GM12878 (cell line): ENCODE measurements at regions of chr20 and their contacts with region 1.

Region 1: DNA sequence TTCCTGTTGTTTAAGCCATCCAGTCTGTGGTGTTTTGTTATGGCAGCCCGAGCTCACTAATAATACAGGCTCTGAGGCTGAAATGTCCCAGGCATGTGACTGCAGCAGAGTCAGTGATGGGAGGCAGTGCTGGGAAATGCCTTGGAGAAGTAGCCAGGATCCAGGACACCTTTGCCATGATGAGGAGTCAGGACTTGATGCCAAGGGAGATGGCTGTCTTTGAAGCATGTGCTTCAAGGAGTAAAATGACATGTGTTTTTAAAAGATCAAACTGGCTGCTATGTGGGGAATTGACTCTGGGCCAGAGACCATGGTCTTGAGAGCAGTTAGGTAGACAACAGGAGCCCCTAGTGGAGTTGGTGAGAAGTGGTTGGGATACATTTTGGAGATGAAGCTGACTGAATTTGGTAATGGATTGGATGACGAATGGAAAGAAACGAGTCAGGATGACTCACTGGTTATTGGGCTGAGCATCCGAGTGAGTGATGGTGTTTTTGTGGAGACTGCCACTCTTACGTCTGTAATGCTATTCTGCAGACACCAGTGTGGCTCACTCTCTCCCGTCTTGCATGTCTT is 322.2 kb downstream of the PLCB1 start:
- DNase-seq: peak; percentile 17
- ATAC-seq: peak; percentile 87
- H3K4me3 ChIP-seq: no peak overlapping the region
- H3K27ac ChIP-seq: no peak overlapping the region
- H3K4me1 ChIP-seq: no peaks in the 10 kb centered on the region
- H3K27me3 ChIP-seq: no peaks in the 10 kb centered on the region
- CTCF ChIP-seq: peak; percentile 52 to 57 (median 52)
- EP300 ChIP-seq: no peak
- POLR2A ChIP-seq: no peak
- RAD21 ChIP-seq: peak; percentile 74

Region 2: GRCh38 chr20:8049310-8049709 is 404.9 kb before region 1 on chr20:
- CTCF ChIA-PET with region 1: interaction called, 9 read pairs
- POLR2A ChIA-PET with region 1: no interaction called
- RAD21 ChIA-PET with region 1: no interaction called
- SMC1A ChIA-PET with region 1: interaction called, 6 read pairs
- in situ Hi-C with region 1: no loop called
- intact Hi-C with region 1: loop called (anchors 5 kb)
- DNase-seq: no peak
- ATAC-seq: no peak
- H3K4me3 ChIP-seq: no peak overlapping the region
- H3K27ac ChIP-seq: no peak overlapping the region
- H3K4me1 ChIP-seq: no peaks in the 10 kb centered on the region
- H3K27me3 ChIP-seq: no peaks in the 10 kb centered on the region
- CTCF ChIP-seq: no peak
- EP300 ChIP-seq: no peak
- POLR2A ChIP-seq: no peak
- RAD21 ChIP-seq: no peak

Region 3: GRCh38 chr20:8305449-8305978 is 148.7 kb before region 1 on chr20:
- CTCF ChIA-PET with region 1: no interaction called
- POLR2A ChIA-PET with region 1: no interaction called
- RAD21 ChIA-PET with region 1: no interaction called
- SMC1A ChIA-PET with region 1: no interaction called
- in situ Hi-C with region 1: no loop called
- intact Hi-C with region 1: loop called (anchors 5 kb)
- DNase-seq: peak; percentile 30
- ATAC-seq: peak; percentile 95
- H3K4me3 ChIP-seq: no peak overlapping the region
- H3K27ac ChIP-seq: no peak overlapping the region
- H3K4me1 ChIP-seq: no peaks in the 10 kb centered on the region
- H3K27me3 ChIP-seq: no peaks in the 10 kb centered on the region
- CTCF ChIP-seq: peak; percentile 65 to 80 (median 79)
- EP300 ChIP-seq: no peak
- POLR2A ChIP-seq: no peak
- RAD21 ChIP-seq: peak; percentile 60

Region 4: DNA sequence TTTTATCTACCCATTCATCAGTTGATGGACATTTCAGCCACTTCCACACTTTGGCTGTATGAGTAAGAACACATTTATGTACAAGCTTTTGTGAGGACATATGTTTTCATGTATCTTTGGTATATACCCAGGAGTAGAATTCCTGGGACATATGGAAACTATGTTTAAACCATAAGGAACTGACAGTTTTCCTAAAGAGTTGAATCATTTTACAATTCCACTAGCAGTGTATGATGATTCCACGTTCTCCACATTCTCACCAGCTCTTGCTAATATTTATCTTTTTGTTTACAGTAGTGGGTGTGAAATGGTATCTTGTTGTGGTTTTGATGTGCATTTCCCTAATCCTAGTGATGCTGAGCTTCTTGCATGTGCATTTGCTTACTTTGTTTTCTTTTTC is 15.9 kb after region 1 on chr20:
- CTCF ChIA-PET with region 1: no interaction called
- POLR2A ChIA-PET with region 1: no interaction called
- RAD21 ChIA-PET with region 1: no interaction called
- SMC1A ChIA-PET with region 1: interaction called, 11 read pairs
- in situ Hi-C with region 1: no loop called
- intact Hi-C with region 1: no loop called
- DNase-seq: no peak
- ATAC-seq: no peak
- H3K4me3 ChIP-seq: no peak overlapping the region
- H3K27ac ChIP-seq: no peak overlapping the region
- H3K4me1 ChIP-seq: no peaks in the 10 kb centered on the region
- H3K27me3 ChIP-seq: no peaks in the 10 kb centered on the region
- CTCF ChIP-seq: no peak
- EP300 ChIP-seq: no peak
- POLR2A ChIP-seq: no peak
- RAD21 ChIP-seq: no peak

Region 5: GRCh38 chr20:8535403-8536261 is 81.4 kb after region 1 on chr20:
- CTCF ChIA-PET with region 1: no interaction called
- POLR2A ChIA-PET with region 1: no interaction called
- RAD21 ChIA-PET with region 1: no interaction called
- SMC1A ChIA-PET with region 1: no interaction called
- in situ Hi-C with region 1: no loop called
- intact Hi-C with region 1: no loop called
- DNase-seq: no peak
- ATAC-seq: peak; percentile 75
- H3K4me3 ChIP-seq: no peak overlapping the region
- H3K27ac ChIP-seq: no peak overlapping the region
- H3K4me1 ChIP-seq: no peaks in the 10 kb centered on the region
- H3K27me3 ChIP-seq: no peaks in the 10 kb centered on the region; a peak in 1 of 4 replicates
- CTCF ChIP-seq: peak; percentile 41 to 53 (median 44); a peak in 5 of 6 replicates
- EP300 ChIP-seq: no peak
- POLR2A ChIP-seq: no peak
- RAD21 ChIP-seq: peak; percentile 30; the same call in 1 of the 2 replicates